H1 (cell line): ENCODE measurements at regions of chr4 and their contacts with region 1.

Region 1: DNA sequence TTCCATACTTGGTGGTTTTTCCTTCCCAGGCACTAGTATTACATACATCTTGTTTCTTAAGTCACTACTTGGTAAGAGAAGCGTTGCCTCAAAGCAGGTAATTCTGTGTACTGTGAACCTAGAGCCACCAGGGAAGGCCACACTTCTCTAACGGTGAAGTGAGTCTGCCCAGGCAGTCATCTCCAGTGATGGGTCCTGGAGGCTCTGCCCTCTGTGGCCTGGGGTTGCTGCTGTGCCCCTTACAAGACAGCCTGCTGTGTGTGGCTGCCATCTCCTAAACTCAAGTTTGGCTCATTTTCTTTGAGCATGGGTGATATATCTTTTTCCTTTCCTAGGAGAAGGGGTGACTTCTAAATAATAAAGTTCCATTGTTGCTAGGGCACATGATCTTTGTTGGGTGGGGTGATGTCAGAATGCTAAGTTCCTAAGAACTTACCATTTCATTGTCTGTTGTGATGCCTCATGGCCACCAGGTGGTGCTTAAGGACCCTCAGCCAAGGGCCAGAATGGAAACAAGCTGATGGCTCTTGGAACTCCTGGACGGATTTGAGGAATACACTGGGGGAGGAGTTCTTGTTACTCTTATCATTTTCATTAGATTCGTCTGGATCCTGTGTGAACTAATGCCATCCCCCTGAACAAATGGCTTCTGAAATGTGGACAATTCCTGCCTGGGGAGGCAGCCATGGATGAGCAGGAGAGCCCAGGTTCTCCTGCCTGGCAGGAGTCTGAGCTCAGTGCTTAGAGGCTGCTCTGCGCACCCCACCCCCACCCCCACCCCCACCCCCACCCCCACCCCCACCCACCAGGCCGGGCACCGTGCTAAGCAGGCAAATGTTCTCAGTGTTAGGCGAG is 41.1 kb upstream of the WDR1 start:
- DNase-seq: peak; percentile 39 to 62
- H3K4me3 ChIP-seq: no peak overlapping the region
- H3K27ac ChIP-seq: no peak overlapping the region
- H3K4me1 ChIP-seq: peaks cover 0 to 5% (median 0%) of the 10 kb centered on the region in 4 experiments; a peak in 1 of 7 replicates
- H3K27me3 ChIP-seq: no peaks in the 10 kb centered on the region; a peak in 4 of 7 replicates
- CTCF ChIP-seq: peak; percentile 52 to 86 (median 73)
- EP300 ChIP-seq: no peak
- POLR2A ChIP-seq: no peak
- RAD21 ChIP-seq: peak; percentile 86 to 88

Region 2: DNA sequence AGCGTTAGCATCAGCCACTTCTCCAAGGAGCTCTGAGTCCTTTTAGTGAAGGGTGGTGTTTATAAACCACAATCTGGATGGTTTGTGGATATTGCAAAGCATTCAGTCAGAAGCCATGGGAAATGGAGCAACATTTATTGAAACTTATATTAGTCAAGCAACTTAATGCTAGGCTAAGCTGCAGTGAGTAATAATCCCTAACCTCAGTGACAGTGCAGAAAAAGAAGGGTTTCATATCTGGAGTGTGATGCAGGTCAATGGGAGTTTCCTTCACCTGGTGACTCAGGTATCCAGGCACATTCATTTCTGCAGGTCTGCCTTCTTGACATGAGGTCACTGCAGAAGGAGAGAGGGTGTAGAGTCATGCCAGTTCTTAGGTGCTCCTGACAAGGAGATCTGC is 386.7 kb before region 1 on chr4:
- CTCF ChIA-PET with region 1: no interaction called
- POLR2A ChIA-PET with region 1: no interaction called
- DNase-seq: no peak
- H3K4me3 ChIP-seq: no peak overlapping the region
- H3K27ac ChIP-seq: no peak overlapping the region
- H3K4me1 ChIP-seq: no peaks in the 10 kb centered on the region
- H3K27me3 ChIP-seq: no peaks in the 10 kb centered on the region
- CTCF ChIP-seq: no peak
- EP300 ChIP-seq: no peak
- POLR2A ChIP-seq: no peak
- RAD21 ChIP-seq: no peak

Region 3: DNA sequence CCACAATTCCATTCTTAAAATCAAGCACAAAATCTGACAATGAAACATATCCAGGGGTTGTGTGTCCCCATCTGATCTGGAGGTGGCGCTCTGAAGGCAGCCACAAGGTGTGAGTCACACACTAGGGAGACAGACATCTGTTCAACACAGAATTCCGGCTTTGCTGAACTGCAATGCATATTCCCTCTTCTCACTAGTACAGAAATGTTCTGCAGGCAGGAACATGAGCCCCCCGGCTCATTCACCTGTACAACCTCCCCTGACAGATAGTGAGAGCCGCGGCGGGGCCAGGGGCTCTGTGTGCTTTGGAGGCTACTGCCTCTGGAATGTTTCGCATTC is 83.0 kb before region 1 on chr4:
- CTCF ChIA-PET with region 1: no interaction called
- POLR2A ChIA-PET with region 1: no interaction called
- DNase-seq: no peak
- H3K4me3 ChIP-seq: no peak overlapping the region
- H3K27ac ChIP-seq: no peak overlapping the region
- H3K4me1 ChIP-seq: no peaks in the 10 kb centered on the region
- H3K27me3 ChIP-seq: no peaks in the 10 kb centered on the region
- CTCF ChIP-seq: peak in 2 of 3 experiments; percentile 38 to 67; a peak in 3 of 4 replicates
- EP300 ChIP-seq: no peak
- POLR2A ChIP-seq: no peak
- RAD21 ChIP-seq: peak; percentile 30 to 33; a peak in 3 of 4 replicates

Region 4: GRCh38 chr4:10173037-10173753 is 15.5 kb after region 1 on chr4:
- CTCF ChIA-PET with region 1: interaction called, 55 read pairs
- POLR2A ChIA-PET with region 1: no interaction called
- DNase-seq: no peak
- H3K4me3 ChIP-seq: no peak overlapping the region
- H3K27ac ChIP-seq: no peak overlapping the region
- H3K4me1 ChIP-seq: no peaks in the 10 kb centered on the region; a peak in 2 of 7 replicates
- H3K27me3 ChIP-seq: no peaks in the 10 kb centered on the region
- CTCF ChIP-seq: peak in 1 of 3 experiments; percentile 16; a peak in 1 of 4 replicates
- EP300 ChIP-seq: no peak
- POLR2A ChIP-seq: no peak
- RAD21 ChIP-seq: 0 out of 4 replicates have a peak, but pooled peaks of 1 of the 2 experiments have one; percentile 9

Region 5: GRCh38 chr4:10273030-10273429 is 115.3 kb after region 1 on chr4:
- CTCF ChIA-PET with region 1: no interaction called
- POLR2A ChIA-PET with region 1: no interaction called
- DNase-seq: no peak
- H3K4me3 ChIP-seq: no peak overlapping the region
- H3K27ac ChIP-seq: no peak overlapping the region
- H3K4me1 ChIP-seq: no peaks in the 10 kb centered on the region
- H3K27me3 ChIP-seq: no peaks in the 10 kb centered on the region
- CTCF ChIP-seq: no peak
- EP300 ChIP-seq: no peak
- POLR2A ChIP-seq: no peak
- RAD21 ChIP-seq: no peak

Region 6: DNA sequence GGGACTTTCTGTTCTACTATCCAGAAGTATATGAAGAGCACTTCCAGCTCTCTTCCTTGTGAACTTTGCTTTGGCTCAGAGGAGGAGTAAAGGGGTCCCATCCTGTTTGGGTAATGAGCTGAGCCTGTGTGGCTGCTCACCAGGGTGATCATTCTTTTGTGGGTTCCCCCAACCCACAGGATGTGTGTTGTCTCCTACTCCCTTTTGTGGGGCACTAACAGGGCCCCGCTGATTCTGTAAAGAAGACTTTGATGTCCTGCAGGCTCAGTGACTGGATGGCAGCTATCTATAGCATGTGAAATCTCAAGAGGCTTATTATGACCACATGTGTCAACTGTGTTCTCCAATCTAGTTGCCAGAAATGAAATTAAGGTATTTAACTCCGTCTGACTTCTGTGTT is 258.7 kb after region 1 on chr4:
- CTCF ChIA-PET with region 1: interaction called, 14 read pairs
- POLR2A ChIA-PET with region 1: no interaction called
- DNase-seq: no peak
- H3K4me3 ChIP-seq: no peak overlapping the region
- H3K27ac ChIP-seq: no peak overlapping the region
- H3K4me1 ChIP-seq: no peaks in the 10 kb centered on the region
- H3K27me3 ChIP-seq: no peaks in the 10 kb centered on the region
- CTCF ChIP-seq: no peak
- EP300 ChIP-seq: no peak
- POLR2A ChIP-seq: no peak
- RAD21 ChIP-seq: no peak

Region 7: DNA sequence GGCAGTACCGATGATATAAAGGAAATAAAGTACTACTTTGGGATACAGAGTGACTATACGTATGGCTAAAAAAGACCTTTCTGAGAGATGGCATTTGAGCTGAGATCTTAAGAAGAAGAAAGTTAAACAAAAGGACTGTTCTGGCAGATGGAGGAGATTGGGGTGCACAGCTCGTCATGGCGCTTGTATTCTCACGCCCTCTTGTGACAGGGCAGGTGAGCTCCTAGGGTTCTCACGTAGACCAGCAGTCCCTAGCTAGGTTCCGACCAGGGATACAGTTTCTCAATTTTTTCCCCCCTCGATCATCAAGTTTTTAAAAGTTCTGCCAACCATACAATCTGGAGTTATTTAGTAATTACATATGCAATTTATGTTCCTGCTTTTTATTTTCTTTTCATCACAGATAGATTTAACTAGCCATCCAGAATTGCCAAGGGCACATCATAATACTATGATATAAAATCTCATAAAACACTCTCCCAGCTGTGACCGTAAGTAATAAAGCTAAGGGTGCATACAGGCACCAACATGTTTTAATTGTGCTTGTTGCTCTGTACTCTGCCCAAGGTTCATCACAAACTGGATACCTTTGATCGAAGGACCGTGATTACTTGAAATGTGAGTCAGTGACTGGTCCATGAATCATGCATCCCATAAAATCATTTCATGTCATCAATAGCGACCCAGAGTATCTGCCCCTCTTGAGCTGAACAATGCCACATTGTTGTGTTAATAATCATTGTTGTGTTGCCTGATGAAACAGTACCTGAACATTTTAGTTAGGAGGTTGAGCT is 368.9 kb after region 1 on chr4:
- CTCF ChIA-PET with region 1: interaction called, 25 read pairs
- POLR2A ChIA-PET with region 1: no interaction called
- DNase-seq: no peak
- H3K4me3 ChIP-seq: no peak overlapping the region
- H3K27ac ChIP-seq: no peak overlapping the region
- H3K4me1 ChIP-seq: no peaks in the 10 kb centered on the region
- H3K27me3 ChIP-seq: no peaks in the 10 kb centered on the region; a peak in 1 of 7 replicates
- CTCF ChIP-seq: peak; percentile 58 to 66 (median 61)
- EP300 ChIP-seq: no peak
- POLR2A ChIP-seq: no peak
- RAD21 ChIP-seq: peak; percentile 74 to 83